PC-3 (cell line): ENCODE measurements at regions of chr13 and their contacts with region 1.

Region 1: GRCh38 chr13:40986101-40986856 is 32.8 kb downstream of the ELF1 start:
- DNase-seq: peak; percentile 71
- ATAC-seq: peak; percentile 98
- H3K4me3 ChIP-seq: no peak overlapping the region
- H3K27ac ChIP-seq: no peak overlapping the region
- H3K4me1 ChIP-seq: peaks cover 10% of the 10 kb centered on the region
- H3K27me3 ChIP-seq: no peaks in the 10 kb centered on the region
- CTCF ChIP-seq: no peak

Region 2: DNA sequence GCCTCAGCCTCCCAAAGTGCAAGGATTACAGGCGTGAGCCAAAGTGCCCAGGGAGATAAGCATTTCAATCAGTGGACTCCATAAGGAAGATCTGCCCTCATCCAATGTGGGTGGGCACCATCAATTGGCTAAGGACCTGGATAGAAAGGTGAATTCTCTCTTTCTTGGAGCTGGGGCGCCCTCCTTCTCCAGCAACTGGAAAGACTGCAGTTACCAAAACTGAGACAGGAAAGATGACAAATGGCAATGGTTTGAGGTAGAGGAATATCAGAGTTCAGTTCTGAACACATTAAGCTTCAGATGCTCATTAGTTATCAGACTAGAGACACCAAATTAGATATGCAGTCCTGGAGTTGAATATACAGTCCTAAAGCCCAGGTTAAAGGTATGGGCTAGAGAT is 43.4 kb after region 1 on chr13:
- CTCF ChIA-PET with region 1: interaction called, 11 read pairs
- POLR2A ChIA-PET with region 1: no interaction called
- intact Hi-C with region 1: no loop called
- DNase-seq: peak; percentile 10
- ATAC-seq: no peak
- H3K4me3 ChIP-seq: no peak overlapping the region
- H3K27ac ChIP-seq: no peak overlapping the region
- H3K4me1 ChIP-seq: no peaks in the 10 kb centered on the region
- H3K27me3 ChIP-seq: no peaks in the 10 kb centered on the region
- CTCF ChIP-seq: peak; percentile 42

Region 3: GRCh38 chr13:41622432-41623429 is 636.5 kb after region 1 on chr13:
- CTCF ChIA-PET with region 1: no interaction called
- POLR2A ChIA-PET with region 1: interaction called, 19 read pairs
- intact Hi-C with region 1: no loop called
- DNase-seq: peak; percentile 55
- ATAC-seq: peak; percentile 88
- H3K4me3 ChIP-seq: no peak overlapping the region
- H3K27ac ChIP-seq: peak overlapping the region; percentile 35
- H3K4me1 ChIP-seq: peaks cover 12% of the 10 kb centered on the region
- H3K27me3 ChIP-seq: no peaks in the 10 kb centered on the region
- CTCF ChIP-seq: no peak